ENCODE measurements at regions of chrX and their contacts with region 1.

Region 1: DNA sequence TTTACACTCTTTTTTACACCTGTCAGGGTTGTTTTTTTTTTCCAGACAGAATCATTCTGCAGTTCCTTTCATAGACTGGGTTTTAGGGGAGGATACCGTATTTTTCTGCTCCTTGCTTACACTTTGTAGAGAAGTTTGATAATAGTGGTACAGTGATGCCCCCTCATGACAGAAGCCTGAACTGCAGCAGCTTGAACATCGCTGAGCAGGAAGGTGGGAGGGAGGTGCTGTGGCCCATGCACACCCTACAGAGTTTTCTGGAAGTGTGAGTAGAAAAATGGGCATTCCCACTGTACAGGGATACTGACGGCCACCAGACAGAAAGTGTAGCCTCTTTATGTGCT is 54.5 kb downstream of the RAB40A start:
- DNase-seq: peak; percentile 52
- H3K4me3 ChIP-seq: peak overlapping the region; percentile 55
- H3K27ac ChIP-seq: no peak overlapping the region
- H3K4me1 ChIP-seq: no peaks in the 10 kb centered on the region
- H3K27me3 ChIP-seq: no peaks in the 10 kb centered on the region
- CTCF ChIP-seq: peak; percentile 79

Region 2: DNA sequence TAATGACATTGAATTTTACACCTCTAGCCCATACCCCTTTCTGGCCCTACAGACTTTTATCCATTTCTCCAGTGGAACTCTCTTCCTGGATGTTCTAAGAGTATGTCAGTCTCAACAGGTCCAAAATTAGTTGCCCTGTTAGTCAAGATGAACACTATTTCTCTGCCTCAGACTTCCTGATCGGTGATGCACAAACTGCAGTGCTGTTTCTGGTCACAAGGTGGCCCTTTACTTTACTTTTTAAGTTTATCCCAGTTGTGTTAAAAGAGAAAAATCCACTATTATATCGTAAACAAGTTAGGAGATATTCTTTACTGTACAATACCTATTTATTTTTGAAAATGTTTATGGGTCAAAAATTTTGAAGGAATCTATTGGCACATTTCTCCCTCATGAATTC is 121.6 kb before region 1 on chrX:
- intact Hi-C with region 1: loop called (anchors 5 kb)
- DNase-seq: peak; percentile 22
- H3K4me3 ChIP-seq: no peak overlapping the region
- H3K27ac ChIP-seq: no peak overlapping the region
- H3K4me1 ChIP-seq: no peaks in the 10 kb centered on the region
- H3K27me3 ChIP-seq: peaks cover 3% of the 10 kb centered on the region
- CTCF ChIP-seq: peak; percentile 75